ENCODE measurements at regions of chr6 and their contacts with region 1.

Region 1: DNA sequence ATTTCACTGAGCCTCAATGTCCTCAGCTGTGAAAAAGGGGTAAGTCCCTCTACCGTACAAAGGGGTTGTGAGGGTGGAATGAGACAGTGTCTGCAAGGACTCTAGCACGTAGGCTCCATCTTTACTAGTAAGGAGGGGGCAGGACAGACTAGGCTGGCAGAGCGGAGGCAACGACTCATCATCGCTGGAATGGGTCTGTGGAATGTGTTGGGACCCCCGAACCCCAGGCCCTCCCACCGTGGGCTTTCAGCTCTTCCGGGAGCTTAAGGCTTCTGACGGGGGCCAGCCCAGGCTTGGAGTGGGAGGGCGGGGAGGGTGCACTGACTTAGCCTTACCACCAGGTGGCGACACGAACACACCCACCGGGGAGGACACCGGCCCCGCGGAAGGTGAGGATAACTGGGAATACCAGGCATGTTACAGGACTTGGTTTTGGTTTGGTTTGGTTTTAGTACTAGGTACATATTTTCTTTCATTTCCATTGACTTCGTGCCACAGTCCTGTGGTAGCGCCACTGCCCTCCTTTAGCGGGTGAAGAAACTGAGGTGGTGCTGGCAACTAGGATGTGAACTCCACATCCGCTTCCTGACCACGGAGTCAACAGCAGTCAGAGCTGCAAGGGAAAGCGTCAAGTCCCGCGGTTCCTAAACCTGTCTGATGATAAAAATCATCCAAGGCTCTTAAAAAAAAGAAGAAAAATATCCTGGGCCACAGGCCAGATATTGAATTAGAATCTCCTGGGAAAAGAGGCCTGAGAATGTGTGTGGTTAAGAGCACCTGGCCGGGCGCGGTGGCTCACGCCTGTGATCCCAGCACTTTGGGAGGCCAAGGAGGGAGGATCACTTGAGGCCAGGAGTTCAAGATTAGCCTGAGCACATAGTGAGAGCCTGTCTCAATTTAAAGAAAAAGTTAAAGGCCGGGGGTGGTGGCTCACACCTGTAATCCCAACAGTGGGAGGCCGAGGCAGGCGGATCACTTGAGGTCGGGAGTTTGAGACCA is 10.3 kb upstream of the TULP1 start:
- DNase-seq: peak; percentile 68 to 88 (median 73)
- H3K4me3 ChIP-seq: peak overlapping the region in 1 of 4 donors; percentile 20
- H3K27ac ChIP-seq: no peak overlapping the region
- H3K4me1 ChIP-seq: peaks cover 0 to 4% of the 10 kb centered on the region in 2 donors
- H3K27me3 ChIP-seq: no peaks in the 10 kb centered on the region
- CTCF ChIP-seq: peak; percentile 89 to 99 (median 96)
- POLR2A ChIP-seq: no peak

Region 2: GRCh38 chr6:35737413-35738211 is 214.7 kb after region 1 on chr6:
- intact Hi-C with region 1: loop called (anchors 2 kb)
- DNase-seq: no peak
- H3K4me3 ChIP-seq: no peak overlapping the region
- H3K27ac ChIP-seq: no peak overlapping the region
- H3K4me1 ChIP-seq: peaks cover 4 to 31% of the 10 kb centered on the region in 2 donors
- H3K27me3 ChIP-seq: no peaks in the 10 kb centered on the region
- CTCF ChIP-seq: peak; percentile 63 to 98 (median 96)
- POLR2A ChIP-seq: no peak

Measured in adrenal gland (tissue), 19 donors.